ENCODE measurements at regions of chr17 and their contacts with region 1.

Region 1: GRCh38 chr17:61551255-61551742 is 39.7 kb downstream of the NACA2 start:
- DNase-seq: peak; percentile 67
- ATAC-seq: peak; percentile 81
- H3K4me3 ChIP-seq: no peak overlapping the region
- H3K27ac ChIP-seq: no peak overlapping the region
- H3K4me1 ChIP-seq: no peaks in the 10 kb centered on the region; the same call in 1 of the 2 replicates
- H3K27me3 ChIP-seq: peaks cover 5% of the 10 kb centered on the region
- CTCF ChIP-seq: peak; percentile 88
- POLR2A ChIP-seq: no peak
- RAD21 ChIP-seq: peak; percentile 87

Region 2: GRCh38 chr17:60959696-60960095 is 591.6 kb before region 1 on chr17:
- CTCF ChIA-PET with region 1: no interaction called
- POLR2A ChIA-PET with region 1: no interaction called
- dilution Hi-C with region 1: no loop called
- in situ Hi-C with region 1: loop called (anchors 10 kb)
- intact Hi-C with region 1: no loop called
- DNase-seq: no peak
- ATAC-seq: 0 out of 2 replicates have a peak, but pooled peaks have one; percentile 17
- H3K4me3 ChIP-seq: no peak overlapping the region
- H3K27ac ChIP-seq: no peak overlapping the region
- H3K4me1 ChIP-seq: no peaks in the 10 kb centered on the region
- H3K27me3 ChIP-seq: no peaks in the 10 kb centered on the region
- CTCF ChIP-seq: no peak
- POLR2A ChIP-seq: no peak
- RAD21 ChIP-seq: no peak

Region 3: DNA sequence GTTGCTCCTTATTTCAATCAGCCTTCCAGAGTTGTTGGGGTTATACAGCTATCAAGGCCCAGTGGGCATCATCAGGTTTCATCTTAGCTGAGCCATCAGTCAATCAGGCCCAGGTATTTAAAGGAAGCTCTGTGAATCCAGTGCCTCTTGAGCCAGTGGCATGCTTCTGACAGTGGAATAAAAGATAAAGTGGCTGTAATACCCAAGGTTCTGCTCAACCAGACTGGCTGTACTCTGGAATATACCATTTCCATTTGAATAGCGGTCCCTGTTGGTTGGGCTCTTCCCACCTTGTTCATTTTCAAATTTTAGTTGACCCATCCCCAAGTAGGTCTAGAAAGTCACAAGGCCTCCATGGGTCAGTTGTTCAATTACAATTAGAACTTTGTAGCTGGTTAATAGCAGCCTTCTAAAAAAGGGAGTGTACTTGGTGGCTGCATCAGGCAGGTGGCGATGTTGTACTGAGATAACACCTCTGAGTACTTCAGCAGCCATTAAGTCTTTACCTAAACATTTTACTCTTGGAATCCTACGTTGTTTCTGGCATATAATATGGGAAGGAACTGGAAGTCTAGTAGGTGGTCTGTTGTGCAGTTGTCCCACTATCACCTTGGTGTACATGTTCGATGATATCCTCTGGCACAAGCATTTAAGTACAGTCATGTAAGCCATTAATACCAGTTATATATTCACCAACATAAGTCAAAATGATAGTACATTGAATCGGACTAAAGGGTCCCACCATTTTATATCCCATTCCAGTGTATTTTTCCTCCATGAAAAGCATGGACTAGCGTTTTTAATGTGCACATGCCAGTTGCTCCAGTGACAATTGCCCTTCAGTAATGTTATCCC is 579.6 kb before region 1 on chr17:
- CTCF ChIA-PET with region 1: no interaction called
- POLR2A ChIA-PET with region 1: no interaction called
- dilution Hi-C with region 1: no loop called
- in situ Hi-C with region 1: loop called (anchors 10 kb)
- intact Hi-C with region 1: loop called (anchors 5 kb)
- DNase-seq: peak; percentile 80
- ATAC-seq: peak; percentile 99
- H3K4me3 ChIP-seq: no peak overlapping the region
- H3K27ac ChIP-seq: no peak overlapping the region
- H3K4me1 ChIP-seq: no peaks in the 10 kb centered on the region
- H3K27me3 ChIP-seq: no peaks in the 10 kb centered on the region
- CTCF ChIP-seq: peak; percentile 86
- POLR2A ChIP-seq: no peak
- RAD21 ChIP-seq: peak; percentile 90

Region 4: GRCh38 chr17:61412143-61412859 is 139.0 kb before region 1 on chr17:
- CTCF ChIA-PET with region 1: interaction called, 7 read pairs
- POLR2A ChIA-PET with region 1: no interaction called
- dilution Hi-C with region 1: no loop called
- in situ Hi-C with region 1: no loop called
- intact Hi-C with region 1: loop called (anchors 1 kb)
- DNase-seq: peak; percentile 75
- ATAC-seq: peak; percentile 44
- H3K4me3 ChIP-seq: peak overlapping the region; percentile 66
- H3K27ac ChIP-seq: peak overlapping the region; percentile 91
- H3K4me1 ChIP-seq: peaks cover 40% of the 10 kb centered on the region
- H3K27me3 ChIP-seq: no peaks in the 10 kb centered on the region
- CTCF ChIP-seq: peak; percentile 98
- POLR2A ChIP-seq: peak; percentile 63
- RAD21 ChIP-seq: peak; percentile 98

Region 5: GRCh38 chr17:61420052-61420451 is 131.2 kb before region 1 on chr17:
- CTCF ChIA-PET with region 1: interaction called, 5 read pairs
- POLR2A ChIA-PET with region 1: no interaction called
- dilution Hi-C with region 1: no loop called
- in situ Hi-C with region 1: loop called (anchors 5 kb)
- intact Hi-C with region 1: loop called (anchors 1 kb)
- DNase-seq: no peak
- ATAC-seq: no peak
- H3K4me3 ChIP-seq: no peak overlapping the region
- H3K27ac ChIP-seq: no peak overlapping the region
- H3K4me1 ChIP-seq: peaks cover 10% of the 10 kb centered on the region
- H3K27me3 ChIP-seq: peaks cover 17% of the 10 kb centered on the region
- CTCF ChIP-seq: no peak
- POLR2A ChIP-seq: no peak
- RAD21 ChIP-seq: no peak

Region 6: DNA sequence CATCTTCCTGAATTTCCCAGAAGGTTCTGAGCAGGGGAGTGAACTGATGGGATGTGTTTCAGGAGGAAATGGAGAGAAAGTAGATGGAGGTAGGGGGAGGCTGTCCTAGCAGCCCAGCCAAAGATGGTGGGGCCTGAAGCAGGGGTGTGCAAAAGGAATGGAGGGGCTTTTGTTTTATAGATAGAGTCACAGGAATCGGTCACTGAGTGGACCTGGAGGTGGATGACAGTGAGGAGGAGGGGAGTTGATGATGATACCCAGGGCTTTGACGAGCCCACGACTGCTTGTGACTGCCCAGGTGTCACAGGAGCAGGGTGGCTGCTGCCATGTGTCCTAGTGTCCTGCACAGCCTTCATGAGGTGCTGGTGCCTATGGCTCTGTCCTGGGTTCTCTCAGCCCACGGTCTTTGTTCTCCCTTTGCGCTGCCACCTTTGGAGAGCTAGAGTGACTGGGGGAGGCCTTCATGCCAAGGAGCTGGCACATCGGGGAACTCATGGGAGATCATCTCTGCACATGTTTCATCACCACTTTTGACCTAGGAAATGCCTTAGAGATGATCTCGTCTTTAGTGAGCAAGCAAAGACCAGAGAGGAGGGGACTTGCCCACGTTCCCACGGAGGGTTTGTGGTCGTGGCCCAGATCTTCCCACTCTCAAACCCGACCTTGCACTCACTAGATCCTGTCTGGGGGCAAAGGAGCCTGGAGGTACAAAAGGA is 75.7 kb before region 1 on chr17:
- CTCF ChIA-PET with region 1: no interaction called
- POLR2A ChIA-PET with region 1: no interaction called
- dilution Hi-C with region 1: no loop called
- in situ Hi-C with region 1: no loop called
- intact Hi-C with region 1: no loop called
- DNase-seq: peak; percentile 77
- ATAC-seq: peak; percentile 79
- H3K4me3 ChIP-seq: no peak overlapping the region
- H3K27ac ChIP-seq: no peak overlapping the region
- H3K4me1 ChIP-seq: peaks cover 10% of the 10 kb centered on the region
- H3K27me3 ChIP-seq: peaks cover 3% of the 10 kb centered on the region
- CTCF ChIP-seq: no peak
- POLR2A ChIP-seq: no peak
- RAD21 ChIP-seq: no peak

Region 7: GRCh38 chr17:61689610-61690180 is 138.4 kb after region 1 on chr17:
- CTCF ChIA-PET with region 1: no interaction called
- POLR2A ChIA-PET with region 1: no interaction called
- dilution Hi-C with region 1: no loop called
- in situ Hi-C with region 1: no loop called
- intact Hi-C with region 1: no loop called
- DNase-seq: peak; percentile 41
- ATAC-seq: peak; percentile 21; the same call in 1 of the 2 replicates
- H3K4me3 ChIP-seq: no peak overlapping the region
- H3K27ac ChIP-seq: no peak overlapping the region
- H3K4me1 ChIP-seq: no peaks in the 10 kb centered on the region; the same call in 1 of the 2 replicates
- H3K27me3 ChIP-seq: no peaks in the 10 kb centered on the region
- CTCF ChIP-seq: no peak
- POLR2A ChIP-seq: no peak
- RAD21 ChIP-seq: no peak

Region 8: DNA sequence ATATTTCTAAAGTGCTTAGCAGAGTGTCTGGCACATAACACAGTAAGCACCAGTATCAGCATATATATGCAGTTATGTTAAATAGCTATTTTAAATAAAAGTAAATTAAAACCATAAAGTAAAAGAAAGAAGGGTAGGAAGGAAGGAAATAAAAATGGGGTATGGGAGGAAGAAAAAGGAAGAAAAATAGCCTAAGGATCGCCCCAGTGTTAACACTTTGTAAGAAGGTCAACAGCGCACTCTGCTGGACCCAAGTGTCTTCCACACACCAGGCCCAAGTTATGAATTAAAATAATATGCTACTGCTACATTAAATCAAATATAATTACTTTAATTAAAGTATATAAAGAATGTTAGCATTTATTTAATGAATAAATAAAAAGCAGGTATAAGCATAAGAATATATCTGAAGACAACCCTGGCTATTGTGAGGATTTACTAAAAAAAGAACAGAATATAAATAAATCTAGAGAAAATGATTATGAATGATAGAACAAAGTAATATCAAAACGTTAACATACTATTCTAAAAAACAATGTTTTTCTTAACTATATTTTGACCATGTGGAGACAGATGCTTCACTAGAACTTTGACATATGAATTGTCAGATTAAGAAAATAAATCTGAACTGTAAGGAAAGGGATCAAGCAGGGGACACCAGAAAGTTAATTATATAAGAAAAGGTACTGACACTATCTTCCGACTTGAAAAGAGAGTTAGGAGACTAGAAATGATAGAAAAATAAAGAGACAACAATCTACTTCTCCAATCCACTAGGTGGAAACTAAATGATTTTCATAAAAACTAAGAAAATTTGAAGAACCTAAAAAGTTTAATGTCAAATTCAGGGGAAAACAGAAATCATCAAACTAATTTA is 286.1 kb after region 1 on chr17:
- CTCF ChIA-PET with region 1: no interaction called
- POLR2A ChIA-PET with region 1: no interaction called
- dilution Hi-C with region 1: no loop called
- in situ Hi-C with region 1: no loop called
- intact Hi-C with region 1: loop called (anchors 1 kb)
- DNase-seq: peak; percentile 81
- ATAC-seq: peak; percentile 84
- H3K4me3 ChIP-seq: no peak overlapping the region
- H3K27ac ChIP-seq: no peak overlapping the region
- H3K4me1 ChIP-seq: peaks cover 4% of the 10 kb centered on the region
- H3K27me3 ChIP-seq: no peaks in the 10 kb centered on the region
- CTCF ChIP-seq: peak; percentile 94
- POLR2A ChIP-seq: no peak
- RAD21 ChIP-seq: peak; percentile 95

Region 9: DNA sequence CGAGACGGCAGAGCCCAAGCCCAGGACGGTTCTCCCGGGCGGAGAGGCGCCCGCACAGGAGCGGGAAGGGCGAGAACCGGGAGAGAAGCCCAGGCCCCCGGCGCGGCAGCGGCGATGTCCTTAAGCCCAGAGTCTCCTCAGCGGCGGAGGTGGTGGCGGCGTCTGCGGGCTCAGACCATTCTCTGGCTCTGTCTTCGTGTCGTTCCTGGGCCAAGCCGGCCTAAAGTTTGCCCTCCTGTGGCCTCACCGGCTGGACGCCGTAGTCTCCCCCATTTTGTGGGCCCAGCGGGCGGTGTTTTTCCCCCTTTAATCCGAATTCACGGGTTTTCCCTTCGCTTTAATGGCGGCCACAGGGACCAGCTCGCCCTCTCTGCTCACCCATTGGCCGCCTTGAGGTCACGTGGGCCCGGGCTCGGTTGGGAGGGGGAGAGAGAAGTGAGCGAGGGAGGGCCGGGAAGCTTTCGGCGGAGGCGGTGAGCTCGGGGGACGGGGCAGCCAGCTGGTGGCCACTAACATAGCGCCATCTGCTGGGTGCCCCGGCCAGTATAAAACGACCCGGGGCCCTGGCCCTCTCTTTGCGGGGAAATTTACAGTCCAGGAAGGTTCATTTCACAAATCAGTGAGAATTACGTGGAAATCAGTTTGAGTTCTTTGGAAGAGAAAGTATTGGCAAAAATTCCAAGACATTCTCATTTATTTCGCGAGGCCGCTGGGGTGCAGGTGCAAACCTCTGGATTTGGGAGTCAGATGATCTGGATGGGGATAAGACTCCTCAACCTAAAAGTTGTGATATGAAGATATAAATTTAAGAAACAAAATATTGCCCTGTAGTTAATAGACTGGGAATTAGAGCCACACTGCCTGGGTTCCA is 514.5 kb after region 1 on chr17:
- CTCF ChIA-PET with region 1: no interaction called
- POLR2A ChIA-PET with region 1: no interaction called
- dilution Hi-C with region 1: no loop called
- in situ Hi-C with region 1: no loop called
- intact Hi-C with region 1: no loop called
- DNase-seq: peak; percentile 96
- ATAC-seq: peak; percentile 95
- H3K4me3 ChIP-seq: peak overlapping the region; percentile 97
- H3K27ac ChIP-seq: peak overlapping the region; percentile 99
- H3K4me1 ChIP-seq: peaks cover 2% of the 10 kb centered on the region; the same call in 1 of the 2 replicates
- H3K27me3 ChIP-seq: no peaks in the 10 kb centered on the region
- CTCF ChIP-seq: peak; percentile 97
- POLR2A ChIP-seq: peak; percentile 83
- RAD21 ChIP-seq: peak; percentile 66

Measured in IMR-90 (cell line).